Ascending aorta (tissue), 2 donors: ENCODE measurements at regions of chr4 and their contacts with region 1.

Region 1: DNA sequence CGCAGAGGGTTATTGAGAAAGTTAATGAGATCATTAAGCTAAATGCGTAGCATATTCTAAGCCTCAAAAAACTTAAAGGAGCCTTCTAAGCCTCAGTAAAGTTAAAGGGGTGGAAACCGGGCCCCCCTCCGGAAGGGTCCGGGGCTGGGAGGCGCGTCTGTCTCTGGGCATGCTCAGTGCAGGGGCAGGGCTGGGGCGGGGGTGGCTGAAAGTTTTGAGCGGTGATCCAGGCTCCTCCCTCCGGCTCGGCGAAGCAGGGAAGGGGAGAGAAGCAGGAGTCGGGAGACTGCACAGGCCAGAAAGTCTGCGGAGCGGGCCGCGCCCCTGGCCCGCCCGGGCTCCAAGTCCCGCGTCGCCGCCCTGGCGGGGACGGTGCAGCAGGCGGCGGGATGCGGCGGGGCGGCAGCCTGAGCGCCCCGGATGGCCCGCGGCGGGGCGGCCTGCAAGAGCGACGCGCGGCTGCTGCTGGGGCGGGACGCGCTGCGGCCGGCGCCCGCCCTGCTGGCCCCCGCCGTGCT is at the start of gene EVC:
- DNase-seq: peak; percentile 29 to 92
- H3K4me3 ChIP-seq: peak within 1 kb of the TSS; percentile 69 to 87
- H3K27ac ChIP-seq: peak within 1 kb of the TSS; percentile 96
- H3K4me1 ChIP-seq: peaks cover 0 to 37% of the 10 kb centered on the region in 2 donors
- H3K27me3 ChIP-seq: no peaks in the 10 kb centered on the region
- CTCF ChIP-seq: no peak
- total RNA-seq, gene EVC: 39.3 TPM

Region 2: GRCh38 chr4:5730993-5731990 is 20.3 kb after region 1 on chr4:
- intact Hi-C with region 1: loop called (anchors 1 kb)
- DNase-seq: peak; percentile 59 to 82
- H3K4me3 ChIP-seq: no peak overlapping the region
- H3K27ac ChIP-seq: peak overlapping the region; percentile 82 to 85
- H3K4me1 ChIP-seq: peaks cover 4 to 20% of the 10 kb centered on the region in 2 donors
- H3K27me3 ChIP-seq: no peaks in the 10 kb centered on the region
- CTCF ChIP-seq: no peak

Region 3: GRCh38 chr4:5747738-5748365 is 36.8 kb after region 1 on chr4:
- intact Hi-C with region 1: loop called (anchors 1 kb)
- DNase-seq: peak; percentile 59 to 92
- H3K4me3 ChIP-seq: no peak overlapping the region
- H3K27ac ChIP-seq: peak overlapping the region; percentile 80 to 85
- H3K4me1 ChIP-seq: peaks cover 5 to 9% of the 10 kb centered on the region in 2 donors
- H3K27me3 ChIP-seq: no peaks in the 10 kb centered on the region
- CTCF ChIP-seq: no peak

Region 4: GRCh38 chr4:5791654-5792053 is 80.6 kb after region 1 on chr4:
- intact Hi-C with region 1: loop called (anchors 1 kb)
- DNase-seq: peak in 1 of 2 donors; percentile 19
- H3K4me3 ChIP-seq: no peak overlapping the region
- H3K27ac ChIP-seq: no peak overlapping the region
- H3K4me1 ChIP-seq: no peaks in the 10 kb centered on the region
- H3K27me3 ChIP-seq: no peaks in the 10 kb centered on the region
- CTCF ChIP-seq: no peak